ENCODE measurements at regions of chr1 and their contacts with region 1.

Region 1: GRCh38 chr1:36420836-36421664 is 23.3 kb upstream of the LSM10 start:
- DNase-seq: peak; percentile 98
- H3K4me3 Mint-ChIP-seq: peak overlapping the region; percentile 26
- H3K27ac Mint-ChIP-seq: peak overlapping the region; percentile 64
- H3K4me1 Mint-ChIP-seq: peaks cover 13% of the 10 kb centered on the region
- H3K27me3 Mint-ChIP-seq: no peaks in the 10 kb centered on the region

Region 2: GRCh38 chr1:36306902-36307456 is 114.1 kb before region 1 on chr1:
- intact Hi-C with region 1: loop called (anchors 5 kb)
- DNase-seq: peak; percentile 99
- H3K4me3 Mint-ChIP-seq: peak overlapping the region; percentile 93
- H3K27ac Mint-ChIP-seq: peak overlapping the region; percentile 95
- H3K4me1 Mint-ChIP-seq: peaks cover 43% of the 10 kb centered on the region
- H3K27me3 Mint-ChIP-seq: no peaks in the 10 kb centered on the region

Region 3: GRCh38 chr1:36342481-36343478 is 78.3 kb before region 1 on chr1:
- intact Hi-C with region 1: loop called (anchors 1 kb)
- DNase-seq: peak; percentile 88
- H3K4me3 Mint-ChIP-seq: no peak overlapping the region
- H3K27ac Mint-ChIP-seq: peak overlapping the region; percentile 74
- H3K4me1 Mint-ChIP-seq: peaks cover 12% of the 10 kb centered on the region
- H3K27me3 Mint-ChIP-seq: no peaks in the 10 kb centered on the region

Measured in activated CD4-positive, alpha-beta T cell treated with anti-CD3 and anti-CD28 coated beads, Interleukin-2, amount 10 ng/mL, durations not matched to agents 24 days and 14 days (primary cell).